Right ventricle myocardium inferior (tissue), 1 donor: ENCODE measurements at regions of chr20 and their contacts with region 1.

Region 1: GRCh38 chr20:52083627-52084232 is 107.8 kb downstream of the ZFP64 start:
- DNase-seq: no peak
- ATAC-seq: peak; percentile 44

Region 2: GRCh38 chr20:50540620-50541605 is 1542.8 kb before region 1 on chr20:
- intact Hi-C with region 1: no loop called
- DNase-seq: no peak
- ATAC-seq: peak; percentile 49

Region 3: DNA sequence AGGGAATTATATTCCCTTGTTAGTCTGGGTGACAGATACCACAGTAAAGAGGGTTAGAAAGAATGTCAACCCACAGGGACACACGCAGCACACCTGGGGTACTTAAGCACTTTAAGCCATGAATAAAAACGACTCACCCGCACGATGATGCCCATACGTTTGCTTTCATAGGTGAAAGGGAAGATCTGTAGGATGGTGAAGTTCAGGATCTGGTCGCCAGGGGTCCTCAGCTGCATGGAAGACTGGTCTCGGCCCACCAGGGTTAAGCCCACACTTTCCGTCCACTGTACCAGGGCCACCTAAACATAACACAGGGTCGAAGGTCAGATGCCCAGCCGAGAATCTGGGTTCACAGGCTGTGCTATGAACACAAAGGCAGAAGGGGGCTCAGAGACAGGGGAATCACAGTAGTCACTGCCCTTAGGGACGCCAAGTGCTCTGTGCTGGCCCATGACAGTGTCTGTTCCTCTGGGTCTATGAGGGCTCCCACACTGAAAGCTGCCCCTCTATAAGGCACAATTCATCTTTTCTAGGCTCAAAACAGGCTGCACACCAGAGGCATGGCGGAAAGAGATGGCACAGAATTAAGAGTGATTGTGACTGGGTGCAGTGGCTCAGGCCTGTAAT is 444.4 kb before region 1 on chr20:
- intact Hi-C with region 1: loop called (anchors 1 kb)
- DNase-seq: no peak
- ATAC-seq: peak; percentile 75

Region 4: DNA sequence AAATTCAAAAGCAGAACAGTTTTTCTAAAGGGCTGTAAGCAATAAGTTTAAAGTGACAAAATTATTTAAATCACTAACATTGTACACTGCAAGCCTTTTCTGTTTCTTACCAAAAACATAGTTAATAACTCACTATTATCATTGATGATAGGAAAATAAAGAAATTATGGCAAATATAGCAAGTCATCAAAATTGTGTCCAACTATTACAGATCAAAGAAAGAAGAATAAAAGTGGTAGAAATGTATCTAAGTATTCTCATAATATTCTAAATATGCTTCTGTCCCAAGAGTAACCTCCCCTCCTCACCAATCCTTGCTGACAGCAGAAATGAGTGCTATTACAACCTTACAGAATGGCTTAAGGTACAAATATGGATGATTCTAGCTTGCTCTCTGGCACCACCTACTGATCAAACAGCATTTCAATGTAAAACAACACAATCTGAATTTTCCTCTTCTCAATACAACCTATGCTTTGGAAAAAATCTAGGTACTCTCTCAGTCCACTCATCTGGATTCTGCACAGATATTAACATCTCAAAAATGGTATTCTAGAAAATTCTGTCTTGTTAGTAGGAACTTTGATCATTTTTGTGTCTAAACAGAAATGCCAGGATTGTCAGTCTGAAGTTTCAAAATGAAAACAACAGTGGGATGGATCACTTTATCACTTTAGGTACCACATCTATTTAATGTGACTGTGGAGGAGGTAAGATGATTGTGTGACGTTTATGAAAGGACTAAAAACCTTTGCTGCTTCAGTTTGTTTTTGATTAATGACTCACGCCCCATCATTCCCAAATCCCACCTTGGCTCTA is 66.9 kb after region 1 on chr20:
- intact Hi-C with region 1: no loop called
- DNase-seq: no peak
- ATAC-seq: no peak